Panc1 (cell line): ENCODE measurements at regions of chr5 and their contacts with region 1.

Region 1: GRCh38 chr5:30040488-30041118 is 1152.9 kb upstream of the CDH6 start:
- DNase-seq: peak; percentile 65
- ATAC-seq: peak; percentile 93
- H3K4me3 ChIP-seq: no peak overlapping the region
- H3K27ac ChIP-seq: no peak overlapping the region; the same call in 1 of the 2 replicates
- H3K4me1 ChIP-seq: no peaks in the 10 kb centered on the region
- H3K27me3 ChIP-seq: no peaks in the 10 kb centered on the region
- CTCF ChIP-seq: peak; percentile 84

Region 2: DNA sequence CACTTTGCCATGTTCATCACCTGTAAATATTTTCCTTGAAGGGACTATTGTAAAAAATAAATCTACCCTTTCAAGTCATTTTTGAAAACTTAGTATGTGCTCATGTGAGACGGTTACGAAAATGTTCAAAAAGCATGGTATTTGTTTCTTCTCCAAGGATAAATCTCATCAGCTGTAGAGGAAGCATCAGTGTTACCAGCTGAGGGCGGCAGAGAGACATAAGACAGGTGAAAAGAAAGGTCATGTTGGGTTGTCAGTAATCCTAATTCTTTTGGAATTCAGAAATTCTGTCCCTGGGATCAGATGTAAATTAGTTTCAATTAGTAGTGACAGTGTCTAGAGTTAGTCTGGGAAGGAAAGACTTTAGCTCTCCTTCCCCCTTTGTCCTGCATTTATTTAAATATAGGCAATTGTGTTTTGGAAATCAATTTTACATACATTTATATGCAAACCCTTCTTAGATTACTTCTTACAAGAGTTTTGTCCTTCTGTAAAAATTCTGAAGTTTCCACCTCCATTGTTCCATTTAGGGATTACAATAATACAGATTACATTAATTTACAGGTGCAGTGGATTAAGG is 361.0 kb after region 1 on chr5:
- CTCF ChIA-PET with region 1: no interaction called
- POLR2A ChIA-PET with region 1: no interaction called
- in situ Hi-C with region 1: no loop called
- intact Hi-C with region 1: loop called (anchors 5 kb)
- DNase-seq: peak; percentile 24
- ATAC-seq: no peak
- H3K4me3 ChIP-seq: no peak overlapping the region
- H3K27ac ChIP-seq: no peak overlapping the region
- H3K4me1 ChIP-seq: no peaks in the 10 kb centered on the region
- H3K27me3 ChIP-seq: no peaks in the 10 kb centered on the region
- CTCF ChIP-seq: peak; percentile 52; the same call in 1 of the 2 replicates

Region 3: GRCh38 chr5:31232273-31232888 is 1191.8 kb after region 1 on chr5:
- CTCF ChIA-PET with region 1: interaction called, 4 read pairs
- POLR2A ChIA-PET with region 1: no interaction called
- in situ Hi-C with region 1: no loop called
- intact Hi-C with region 1: loop called (anchors 2 kb)
- DNase-seq: peak; percentile 47
- ATAC-seq: peak; percentile 85
- H3K4me3 ChIP-seq: no peak overlapping the region
- H3K27ac ChIP-seq: no peak overlapping the region
- H3K4me1 ChIP-seq: no peaks in the 10 kb centered on the region
- H3K27me3 ChIP-seq: no peaks in the 10 kb centered on the region
- CTCF ChIP-seq: peak; percentile 82